Body of pancreas (tissue), 4 donors: ENCODE measurements at regions of chr1 and their contacts with region 1.

Region 1: DNA sequence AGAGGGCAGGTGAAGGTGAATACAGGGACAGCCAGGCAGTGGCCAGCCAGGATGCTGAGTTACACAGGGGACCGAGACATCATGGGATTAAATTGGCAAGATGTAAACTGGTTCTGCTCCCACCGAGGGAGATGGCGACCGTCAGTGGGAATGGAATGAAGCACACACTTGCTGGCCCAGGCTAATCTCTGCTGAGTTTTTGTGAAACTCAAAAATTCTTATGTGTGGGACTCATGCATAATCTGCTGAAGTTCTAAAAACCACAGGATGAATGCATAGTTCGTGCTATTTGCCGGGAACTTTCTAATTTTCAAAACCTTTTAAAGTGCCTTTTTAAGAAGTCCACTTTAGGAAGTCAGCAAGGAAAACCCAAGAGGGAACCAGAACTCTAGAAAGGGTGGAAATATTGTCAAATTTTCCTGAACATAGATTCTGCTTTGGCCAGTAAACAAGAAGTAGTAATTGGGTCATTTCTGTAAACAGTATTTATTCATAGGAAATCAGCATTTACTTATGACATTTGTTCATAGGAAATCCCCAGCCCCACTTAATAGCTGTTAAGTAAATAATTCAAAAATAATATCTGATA is 85.4 kb upstream of the ROR1 start:
- DNase-seq: no peak
- ATAC-seq: no peak
- H3K4me3 ChIP-seq: no peak overlapping the region
- H3K27ac ChIP-seq: no peak overlapping the region
- H3K4me1 ChIP-seq: peaks cover 15% of the 10 kb centered on the region
- H3K27me3 ChIP-seq: no peaks in the 10 kb centered on the region
- CTCF ChIP-seq: no peak
- POLR2A ChIP-seq: no peak

Region 2: DNA sequence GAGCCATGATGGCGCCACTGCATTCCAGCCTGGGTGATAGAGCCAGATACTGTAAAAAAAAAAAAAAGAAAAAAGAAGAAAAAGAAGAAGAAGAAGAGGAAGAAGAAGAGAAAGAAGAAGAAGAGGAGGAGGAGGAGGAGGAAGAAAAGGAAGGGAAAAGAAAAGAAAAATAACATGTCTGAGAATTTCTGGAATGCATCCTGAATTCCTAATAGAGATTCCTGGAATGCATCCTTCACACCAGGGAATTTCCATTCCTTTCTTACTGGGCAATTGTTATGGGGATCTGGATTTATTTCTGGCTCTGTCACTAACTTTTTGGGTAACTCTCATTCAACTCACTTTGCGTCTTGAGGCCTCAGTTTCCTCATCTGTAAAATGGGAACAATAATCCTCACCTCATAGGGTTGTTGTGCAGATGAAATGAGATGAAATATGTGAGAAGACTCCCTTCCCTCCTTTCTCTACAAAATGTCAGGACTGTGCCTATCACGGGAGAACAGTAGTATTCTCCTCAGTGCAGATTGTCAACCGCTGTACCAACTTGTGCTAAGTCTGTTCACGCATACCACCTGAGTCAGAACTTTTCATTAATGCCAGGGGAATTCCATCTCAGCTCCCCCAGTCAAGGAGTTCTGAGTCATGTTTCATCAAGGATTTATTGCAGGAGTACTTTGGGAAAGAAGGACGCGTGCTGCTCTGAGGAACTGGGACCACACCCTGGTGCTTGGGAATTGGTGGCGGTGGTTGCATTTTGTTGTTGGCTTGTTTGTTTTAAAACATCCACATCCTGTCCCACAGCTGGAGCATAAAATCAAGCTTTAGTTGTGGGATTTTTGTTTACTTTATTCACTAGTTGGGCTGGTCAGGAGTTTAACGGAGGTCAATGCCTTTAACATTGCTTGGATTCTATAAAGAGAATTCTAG is 43.0 kb after region 1 on chr1:
- intact Hi-C with region 1: no loop called
- DNase-seq: peak in 1 of 4 donors; percentile 10
- ATAC-seq: no peak
- H3K4me3 ChIP-seq: no peak overlapping the region
- H3K27ac ChIP-seq: no peak overlapping the region
- H3K4me1 ChIP-seq: no peaks in the 10 kb centered on the region
- H3K27me3 ChIP-seq: no peaks in the 10 kb centered on the region
- CTCF ChIP-seq: no peak
- POLR2A ChIP-seq: no peak

Region 3: GRCh38 chr1:63861052-63861691 is 172.8 kb after region 1 on chr1:
- intact Hi-C with region 1: no loop called
- DNase-seq: no peak
- ATAC-seq: peak; percentile 18
- H3K4me3 ChIP-seq: no peak overlapping the region
- H3K27ac ChIP-seq: no peak overlapping the region
- H3K4me1 ChIP-seq: peaks cover 21% of the 10 kb centered on the region
- H3K27me3 ChIP-seq: no peaks in the 10 kb centered on the region
- CTCF ChIP-seq: no peak
- POLR2A ChIP-seq: no peak

Region 4: GRCh38 chr1:64147759-64148158 is 459.4 kb after region 1 on chr1:
- intact Hi-C with region 1: loop called (anchors 10 kb)
- DNase-seq: no peak
- ATAC-seq: no peak
- H3K4me3 ChIP-seq: no peak overlapping the region
- H3K27ac ChIP-seq: no peak overlapping the region
- H3K4me1 ChIP-seq: no peaks in the 10 kb centered on the region
- H3K27me3 ChIP-seq: no peaks in the 10 kb centered on the region
- CTCF ChIP-seq: no peak
- POLR2A ChIP-seq: no peak